Left cardiac atrium (tissue), 4 donors: ENCODE measurements at regions of chr1 and their contacts with region 1.

Region 1: GRCh38 chr1:116878804-116879477 is 30.8 kb upstream of the PTGFRN start:
- DNase-seq: peak; percentile 33
- ATAC-seq: peak; percentile 31 to 52

Region 2: DNA sequence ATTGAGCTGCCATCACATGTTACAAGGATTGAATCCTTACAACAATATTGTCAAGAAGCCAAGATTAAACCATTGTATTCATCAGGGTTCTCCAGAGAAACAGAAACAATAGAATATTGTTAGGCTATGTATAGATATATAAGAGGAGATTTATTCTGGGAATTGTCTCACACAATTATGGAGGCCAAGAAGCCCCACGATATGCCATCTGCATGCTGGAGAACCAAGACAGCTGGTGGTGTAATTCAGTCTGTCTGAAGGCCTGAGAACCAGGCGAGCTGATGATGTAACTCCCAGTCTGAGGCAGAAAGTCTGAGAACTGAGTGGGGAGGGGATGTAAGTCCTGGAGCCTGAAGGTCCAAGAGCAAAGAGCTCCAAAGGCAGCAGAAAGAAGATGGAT is 166.7 kb after region 1 on chr1:
- intact Hi-C with region 1: loop called in 1 of 2 experiments (anchors 10 kb)
- DNase-seq: no peak
- ATAC-seq: no peak